ENCODE measurements at regions of chr2 and their contacts with region 1.

Region 1: DNA sequence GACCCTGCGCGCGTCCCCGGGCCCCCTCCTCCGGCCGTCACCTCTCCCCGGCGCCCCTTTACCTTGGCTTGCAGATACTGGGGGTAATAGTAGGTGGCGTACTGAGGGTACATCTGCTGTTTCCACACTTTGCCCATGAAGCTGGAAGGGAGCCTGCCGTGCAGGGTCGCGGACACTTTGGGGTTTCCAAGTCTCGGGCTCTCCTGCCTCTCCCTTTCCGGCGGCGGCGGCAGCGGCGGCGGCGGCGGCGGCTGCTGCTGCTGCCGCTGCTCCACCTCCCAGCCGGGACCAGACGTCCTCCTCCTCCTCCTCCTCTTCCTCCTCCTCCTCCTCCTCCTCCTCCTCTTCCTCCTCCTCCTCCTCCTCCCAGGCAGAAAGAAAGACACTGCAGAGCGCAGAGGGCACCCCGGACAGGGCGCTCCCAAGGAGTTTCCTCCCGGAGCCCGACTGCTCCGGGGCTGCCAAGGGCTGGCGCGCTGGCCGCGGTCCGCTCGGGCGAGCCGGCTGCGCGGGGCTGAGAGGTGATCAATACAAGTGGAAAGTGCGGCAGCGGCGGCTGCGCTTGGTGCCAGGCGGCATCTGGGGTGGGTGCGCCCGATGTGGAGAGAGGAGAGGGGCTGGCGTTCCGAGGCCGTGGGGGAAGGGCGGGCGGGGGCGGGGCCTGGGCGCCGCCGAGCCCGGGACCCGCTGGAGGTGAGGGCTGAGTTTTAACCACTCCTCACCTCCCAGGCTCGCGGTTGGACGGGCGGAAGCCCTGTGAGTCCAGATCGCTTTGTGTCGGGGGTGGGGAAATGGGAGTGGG is at the start of gene RBMS1:
- DNase-seq: peak; percentile 51
- H3K4me3 ChIP-seq: peak within 1 kb of the TSS; percentile 91 to 97
- H3K27ac ChIP-seq: peak within 1 kb of the TSS; percentile 89 to 93
- H3K4me1 ChIP-seq: no peaks in the 10 kb centered on the region
- H3K27me3 ChIP-seq: no peaks in the 10 kb centered on the region
- CTCF ChIP-seq: no peak
- POLR2A ChIP-seq: peak; percentile 54
- total RNA-seq, gene RBMS1: 18.8 to 22.8 TPM

Region 2: GRCh38 chr2:160269803-160270570 is 223.4 kb before region 1 on chr2:
- intact Hi-C with region 1: loop called (anchors 5 kb)
- DNase-seq: peak; percentile 78
- H3K4me3 ChIP-seq: peak overlapping the region; percentile 26 to 39
- H3K27ac ChIP-seq: peak overlapping the region; percentile 80 to 83
- H3K4me1 ChIP-seq: no peaks in the 10 kb centered on the region
- H3K27me3 ChIP-seq: no peaks in the 10 kb centered on the region
- CTCF ChIP-seq: peak; percentile 45 to 79 (median 62)
- POLR2A ChIP-seq: peak; percentile 31

Region 3: GRCh38 chr2:160332318-160332717 is 161.1 kb before region 1 on chr2:
- intact Hi-C with region 1: loop called (anchors 10 kb)
- DNase-seq: no peak
- H3K4me3 ChIP-seq: no peak overlapping the region
- H3K27ac ChIP-seq: no peak overlapping the region
- H3K4me1 ChIP-seq: no peaks in the 10 kb centered on the region
- H3K27me3 ChIP-seq: no peaks in the 10 kb centered on the region
- CTCF ChIP-seq: no peak
- POLR2A ChIP-seq: no peak

Region 4: GRCh38 chr2:160406591-160407392 is 86.6 kb before region 1 on chr2:
- intact Hi-C with region 1: loop called (anchors 5 kb)
- DNase-seq: peak; percentile 52
- H3K4me3 ChIP-seq: peak overlapping the region; percentile 84 to 87
- H3K27ac ChIP-seq: peak overlapping the region; percentile 83 to 85
- H3K4me1 ChIP-seq: no peaks in the 10 kb centered on the region
- H3K27me3 ChIP-seq: no peaks in the 10 kb centered on the region
- CTCF ChIP-seq: no peak
- POLR2A ChIP-seq: no peak

Measured in prostate gland (tissue), 2 donors.